ENCODE measurements at regions of chr19 and their contacts with region 1.

Region 1: GRCh38 chr19:38929929-38930775 is at the start of gene SARS2:
- DNase-seq: peak; percentile 83 to 98 (median 92)
- ATAC-seq: peak; percentile 74
- H3K4me3 ChIP-seq: peak within 1 kb of the TSS; percentile 81 to 85
- H3K4me3 Mint-ChIP-seq: peak within 1 kb of the TSS; percentile 97
- H3K27ac ChIP-seq: peak within 1 kb of the TSS; percentile 85 to 87
- H3K27ac Mint-ChIP-seq: peak within 1 kb of the TSS; percentile 100
- H3K4me1 ChIP-seq: peaks cover 22% of the 10 kb centered on the region
- H3K4me1 Mint-ChIP-seq: peaks cover 39% of the 10 kb centered on the region
- H3K27me3 ChIP-seq: no peaks in the 10 kb centered on the region
- H3K27me3 Mint-ChIP-seq: no peaks in the 10 kb centered on the region
- CTCF ChIP-seq: peak; percentile 100
- total RNA-seq, gene SARS2: 24.3 to 26.1 TPM

Region 2: GRCh38 chr19:38402967-38403861 is 526.9 kb before region 1 on chr19 and contains the start of gene FAM98C:
- CTCF ChIA-PET with region 1: interaction called, 36 read pairs
- POLR2A ChIA-PET with region 1: interaction called, 9 read pairs
- intact Hi-C with region 1: loop called in 1 of 2 experiments (anchors 1 kb)
- DNase-seq: peak; percentile 95 to 99 (median 97)
- ATAC-seq: peak; percentile 96
- H3K4me3 ChIP-seq: peak within 1 kb of the TSS; percentile 76 to 95
- H3K4me3 Mint-ChIP-seq: peak within 1 kb of the TSS; percentile 94
- H3K27ac ChIP-seq: peak within 1 kb of the TSS; percentile 79 to 81
- H3K27ac Mint-ChIP-seq: peak within 1 kb of the TSS; percentile 98
- H3K4me1 ChIP-seq: peaks cover 11% of the 10 kb centered on the region
- H3K4me1 Mint-ChIP-seq: peaks cover 15% of the 10 kb centered on the region
- H3K27me3 ChIP-seq: no peaks in the 10 kb centered on the region
- H3K27me3 Mint-ChIP-seq: no peaks in the 10 kb centered on the region
- CTCF ChIP-seq: peak; percentile 95
- total RNA-seq, gene FAM98C: 28.2 to 29.3 TPM

Region 3: GRCh38 chr19:38618590-38619360 is 311.4 kb before region 1 on chr19 and contains the start of gene EIF3K:
- CTCF ChIA-PET with region 1: interaction called, 3 read pairs
- POLR2A ChIA-PET with region 1: interaction called, 5 read pairs
- intact Hi-C with region 1: loop called (anchors 1 to 2 kb)
- DNase-seq: peak; percentile 86 to 100 (median 97)
- ATAC-seq: peak; percentile 68
- H3K4me3 ChIP-seq: peak within 1 kb of the TSS; percentile 84 to 85
- H3K4me3 Mint-ChIP-seq: peak within 1 kb of the TSS; percentile 99
- H3K27ac ChIP-seq: peak within 1 kb of the TSS; percentile 89 to 96
- H3K27ac Mint-ChIP-seq: peak within 1 kb of the TSS; percentile 98
- H3K4me1 ChIP-seq: peaks cover 38% of the 10 kb centered on the region
- H3K4me1 Mint-ChIP-seq: peaks cover 49% of the 10 kb centered on the region
- H3K27me3 ChIP-seq: no peaks in the 10 kb centered on the region
- H3K27me3 Mint-ChIP-seq: no peaks in the 10 kb centered on the region
- CTCF ChIP-seq: no peak
- total RNA-seq, gene EIF3K: 313 to 315 TPM

Region 4: GRCh38 chr19:38729653-38730469 is 200.3 kb before region 1 on chr19:
- CTCF ChIA-PET with region 1: interaction called, 11 read pairs
- POLR2A ChIA-PET with region 1: interaction called, 3 read pairs
- intact Hi-C with region 1: loop called in 1 of 2 experiments (anchors 1 kb)
- DNase-seq: peak; percentile 47 to 86 (median 79)
- ATAC-seq: peak; percentile 62
- H3K4me3 ChIP-seq: no peak overlapping the region
- H3K4me3 Mint-ChIP-seq: no peak overlapping the region
- H3K27ac ChIP-seq: no peak overlapping the region
- H3K27ac Mint-ChIP-seq: no peak overlapping the region
- H3K4me1 ChIP-seq: peaks cover 17% of the 10 kb centered on the region
- H3K4me1 Mint-ChIP-seq: peaks cover 32% of the 10 kb centered on the region
- H3K27me3 ChIP-seq: no peaks in the 10 kb centered on the region
- H3K27me3 Mint-ChIP-seq: no peaks in the 10 kb centered on the region
- CTCF ChIP-seq: peak; percentile 75

Region 5: DNA sequence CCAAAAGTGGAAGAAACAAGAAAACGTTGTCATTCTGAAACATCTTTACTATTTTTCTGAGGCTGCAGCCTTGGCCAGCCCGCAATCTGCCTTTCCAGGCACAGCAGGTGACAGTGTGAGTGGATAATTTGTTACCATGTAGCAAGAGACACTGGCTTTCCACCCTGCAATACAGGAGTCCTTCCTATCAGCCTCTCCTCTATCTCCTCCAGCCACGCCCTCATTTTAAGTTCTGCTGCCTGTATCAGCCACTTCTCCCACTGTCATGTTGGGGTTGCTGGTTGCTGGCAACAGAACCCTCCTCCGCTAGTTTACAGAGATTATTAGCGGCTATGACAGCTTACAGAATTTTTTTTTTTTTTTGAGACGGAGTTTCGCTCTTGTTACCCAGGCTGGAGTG is 149.1 kb before region 1 on chr19:
- CTCF ChIA-PET with region 1: no interaction called
- POLR2A ChIA-PET with region 1: no interaction called
- intact Hi-C with region 1: no loop called
- DNase-seq: no peak
- ATAC-seq: no peak
- H3K4me3 ChIP-seq: no peak overlapping the region
- H3K4me3 Mint-ChIP-seq: no peak overlapping the region
- H3K27ac ChIP-seq: no peak overlapping the region
- H3K27ac Mint-ChIP-seq: no peak overlapping the region
- H3K4me1 ChIP-seq: no peaks in the 10 kb centered on the region
- H3K4me1 Mint-ChIP-seq: no peaks in the 10 kb centered on the region
- H3K27me3 ChIP-seq: no peaks in the 10 kb centered on the region
- H3K27me3 Mint-ChIP-seq: no peaks in the 10 kb centered on the region
- CTCF ChIP-seq: no peak

Region 6: DNA sequence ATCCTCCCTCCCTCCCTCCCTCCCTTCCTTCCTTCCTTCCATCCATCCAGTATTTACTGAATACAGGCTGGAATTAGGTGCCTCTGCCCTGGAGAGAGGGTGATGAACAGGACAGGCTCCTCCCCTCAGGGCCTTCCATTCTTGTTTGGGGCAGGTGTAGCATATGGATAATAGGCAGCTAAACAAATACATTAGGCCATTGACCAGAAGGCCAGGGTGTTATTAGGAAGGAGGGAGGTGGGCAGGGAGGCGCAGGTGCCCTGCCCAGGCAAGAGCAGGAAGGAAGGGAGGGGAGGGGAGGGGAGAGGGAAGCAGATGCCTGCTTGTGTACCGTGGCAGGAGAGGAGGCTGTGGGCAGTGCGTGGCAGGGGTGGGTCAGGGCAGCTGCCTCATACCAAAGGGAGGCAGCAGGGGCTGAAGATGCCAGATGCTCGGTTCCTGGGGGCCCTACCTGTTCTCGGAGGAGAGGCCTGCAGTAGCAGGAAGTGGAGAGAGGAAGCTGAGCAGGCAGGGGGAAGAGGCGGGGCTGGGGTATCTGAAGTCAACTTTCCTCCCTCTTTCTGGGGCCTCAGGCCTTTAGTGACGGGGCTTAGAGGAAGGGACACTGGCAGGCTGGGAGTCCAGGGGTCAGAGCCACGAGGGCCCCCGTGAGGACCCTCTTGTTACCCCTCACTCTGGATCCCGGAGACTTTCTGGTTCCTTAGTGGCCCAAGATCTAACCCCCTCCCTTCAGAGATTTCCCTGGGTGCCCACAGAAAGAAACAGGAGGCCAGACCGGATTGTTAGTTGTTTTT is 52.2 kb before region 1 on chr19 and contains the start of gene RINL:
- CTCF ChIA-PET with region 1: interaction called, 10 read pairs
- POLR2A ChIA-PET with region 1: interaction called, 5 read pairs
- intact Hi-C with region 1: loop called in 1 of 2 experiments (anchors 2 kb)
- DNase-seq: peak in 8 of 9 experiments; percentile 63 to 85 (median 76)
- ATAC-seq: peak; percentile 94
- H3K4me3 ChIP-seq: peak within 1 kb of the TSS; percentile 52 to 65
- H3K4me3 Mint-ChIP-seq: peak within 1 kb of the TSS; percentile 87
- H3K27ac ChIP-seq: peak within 1 kb of the TSS; percentile 79 to 95
- H3K27ac Mint-ChIP-seq: peak within 1 kb of the TSS; percentile 97
- H3K4me1 ChIP-seq: peaks cover 36% of the 10 kb centered on the region
- H3K4me1 Mint-ChIP-seq: peaks cover 37% of the 10 kb centered on the region
- H3K27me3 ChIP-seq: no peaks in the 10 kb centered on the region
- H3K27me3 Mint-ChIP-seq: no peaks in the 10 kb centered on the region
- CTCF ChIP-seq: no peak
- total RNA-seq, gene RINL: 18.1 to 18.4 TPM

Region 7: GRCh38 chr19:38959618-38960017 is 29.5 kb after region 1 on chr19:
- CTCF ChIA-PET with region 1: interaction called, 3 read pairs
- POLR2A ChIA-PET with region 1: interaction called, 3 read pairs
- intact Hi-C with region 1: loop called in 1 of 2 experiments (anchors 1 kb)
- DNase-seq: no peak
- ATAC-seq: no peak
- H3K4me3 ChIP-seq: no peak overlapping the region
- H3K4me3 Mint-ChIP-seq: no peak overlapping the region
- H3K27ac ChIP-seq: no peak overlapping the region
- H3K27ac Mint-ChIP-seq: no peak overlapping the region
- H3K4me1 ChIP-seq: peaks cover 4% of the 10 kb centered on the region
- H3K4me1 Mint-ChIP-seq: peaks cover 5% of the 10 kb centered on the region
- H3K27me3 ChIP-seq: no peaks in the 10 kb centered on the region
- H3K27me3 Mint-ChIP-seq: peaks cover 4% of the 10 kb centered on the region
- CTCF ChIP-seq: no peak